Cardiac septum (tissue), 1 donor: ENCODE measurements at regions of chr10 and their contacts with region 1.

Region 1: DNA sequence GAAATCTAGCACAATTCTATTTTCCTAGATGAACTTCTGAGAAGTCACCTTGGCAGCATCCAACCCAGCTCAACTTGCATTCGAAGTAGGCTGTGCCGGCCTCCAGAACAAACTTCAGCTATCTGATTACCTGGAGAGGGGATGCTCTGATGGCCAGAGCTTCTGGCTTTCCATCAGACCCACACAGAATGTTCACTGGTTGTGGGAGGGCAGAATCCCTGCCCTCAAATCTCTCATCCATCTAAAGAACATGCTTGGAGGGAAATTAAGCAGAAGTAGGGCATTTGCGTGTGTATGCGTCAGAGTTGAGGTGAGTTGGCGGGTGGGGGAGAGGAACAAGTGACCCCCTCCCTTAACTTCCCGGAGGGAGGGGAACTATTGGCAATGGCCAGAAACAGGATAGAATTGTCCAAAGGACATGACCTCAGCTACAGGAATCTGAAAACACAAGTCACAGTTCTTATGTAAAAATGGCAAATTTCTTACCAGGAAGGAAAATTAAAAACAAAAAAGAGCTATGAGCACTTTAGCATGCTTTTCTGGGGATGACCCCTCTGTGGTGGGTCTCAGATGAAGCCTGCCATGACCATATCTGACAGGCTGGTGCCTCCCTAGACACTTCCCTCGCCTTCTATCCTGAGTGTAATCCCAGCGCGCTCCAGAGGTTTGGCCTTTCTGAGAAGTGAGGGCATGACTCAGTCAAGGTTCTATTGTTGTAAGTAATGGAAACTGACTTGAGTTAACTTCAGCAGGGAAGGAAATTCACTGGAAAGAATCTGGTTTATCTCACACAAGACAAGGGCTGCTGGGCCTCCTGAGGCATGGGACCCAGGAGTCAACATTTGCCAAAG is 278.8 kb downstream of the RPS24 start:
- DNase-seq: peak; percentile 56

Region 2: DNA sequence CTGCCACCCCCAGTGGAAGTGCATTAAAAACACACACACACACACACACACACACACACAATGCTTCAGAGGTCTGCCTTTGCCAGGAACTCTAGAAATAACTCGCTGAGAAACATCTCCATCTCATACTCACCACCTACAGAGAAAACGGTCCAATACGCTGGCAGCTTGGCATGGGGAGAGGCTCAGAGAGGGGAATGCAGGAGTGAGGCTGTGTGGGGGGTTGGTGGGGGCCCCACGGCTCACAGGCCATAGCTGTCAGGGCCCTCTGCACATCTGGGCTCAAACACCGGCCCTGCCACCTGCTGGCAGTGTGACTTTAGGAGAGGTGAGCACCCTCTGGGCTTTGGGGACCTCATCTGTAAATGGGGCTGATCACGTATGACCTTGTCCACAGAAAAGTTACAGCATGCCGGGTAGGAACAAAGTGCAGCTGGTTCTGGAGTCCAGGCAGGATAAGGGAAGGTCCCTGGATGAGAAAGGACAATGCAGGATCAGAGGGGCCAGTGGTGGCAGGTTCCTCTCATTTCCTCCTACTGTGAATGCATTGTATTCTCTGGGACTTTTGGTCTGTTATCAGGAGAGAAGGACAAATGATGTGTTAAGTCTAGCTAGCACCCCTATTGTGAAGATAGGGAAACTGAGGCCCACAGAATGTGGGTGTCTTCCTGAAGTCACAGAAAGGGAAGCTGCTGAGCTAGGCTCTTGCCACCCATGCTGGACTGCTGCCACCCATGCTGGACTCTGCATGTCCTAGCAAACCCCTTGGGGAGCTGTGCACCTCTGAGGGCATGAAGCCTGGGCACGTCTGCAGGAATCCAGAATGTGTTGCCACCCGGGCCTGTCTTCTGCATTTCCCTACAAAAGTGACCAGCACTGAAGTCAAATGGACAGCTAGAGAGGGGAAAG is 125.8 kb after region 1 on chr10:
- intact Hi-C with region 1: loop called (anchors 5 kb)
- DNase-seq: peak; percentile 50